Uterus (tissue), 4 donors: ENCODE measurements at regions of chr16 and their contacts with region 1.

Region 1: GRCh38 chr16:10922328-10923145 is 19.7 kb downstream of the DEXI start:
- DNase-seq: no peak
- H3K4me3 ChIP-seq: no peak overlapping the region
- H3K27ac ChIP-seq: peak overlapping the region in 1 of 2 donors; percentile 14
- H3K4me1 ChIP-seq: peaks cover 4 to 6% of the 10 kb centered on the region in 2 donors
- H3K27me3 ChIP-seq: no peaks in the 10 kb centered on the region
- CTCF ChIP-seq: no peak
- POLR2A ChIP-seq: no peak

Region 2: DNA sequence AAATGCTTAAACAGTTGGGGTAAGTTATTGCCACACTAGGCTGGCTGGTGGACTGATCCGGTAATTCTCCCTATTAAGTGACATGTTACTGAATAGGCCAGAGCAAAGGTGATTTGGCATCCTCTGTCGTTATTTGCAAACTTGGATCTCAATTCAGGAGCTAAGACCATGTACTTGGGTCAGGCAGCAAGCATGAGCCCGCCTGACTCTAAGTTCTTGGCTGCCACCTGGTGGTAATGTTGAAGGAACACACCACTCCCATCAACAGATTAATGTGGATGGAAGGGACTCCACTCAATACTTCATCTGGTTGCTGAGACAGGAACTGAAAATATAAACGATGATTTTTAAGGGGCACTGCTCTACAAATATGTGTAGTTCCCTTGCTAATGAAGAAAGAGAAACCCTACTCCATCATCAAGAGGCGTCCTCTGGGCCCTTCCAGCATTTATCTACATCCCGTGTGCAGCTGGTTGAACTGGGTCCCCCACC is 413.0 kb before region 1 on chr16:
- intact Hi-C with region 1: loop called (anchors 10 kb)
- DNase-seq: peak; percentile 49 to 50
- H3K4me3 ChIP-seq: no peak overlapping the region
- H3K27ac ChIP-seq: no peak overlapping the region
- H3K4me1 ChIP-seq: peaks cover 0 to 4% of the 10 kb centered on the region in 2 donors
- H3K27me3 ChIP-seq: no peaks in the 10 kb centered on the region
- CTCF ChIP-seq: peak; percentile 64 to 83 (median 71)
- POLR2A ChIP-seq: no peak